SK-N-SH (cell line): ENCODE measurements at regions of chr9 and their contacts with region 1.

Region 1: GRCh38 chr9:131762356-131762932 is 22.6 kb upstream of the RAPGEF1 start:
- DNase-seq: peak; percentile 97
- H3K4me3 ChIP-seq: peak overlapping the region in 1 of 2 experiments; percentile 46; a peak in 1 of 4 replicates
- H3K27ac ChIP-seq: no peak overlapping the region
- H3K4me1 ChIP-seq: peaks cover 0 to 3% of the 10 kb centered on the region in 2 experiments; a peak in 1 of 4 replicates
- H3K27me3 ChIP-seq: peaks cover 8% of the 10 kb centered on the region
- CTCF ChIP-seq: peak; percentile 79
- EP300 ChIP-seq: no peak
- RAD21 ChIP-seq: peak; percentile 97

Region 2: DNA sequence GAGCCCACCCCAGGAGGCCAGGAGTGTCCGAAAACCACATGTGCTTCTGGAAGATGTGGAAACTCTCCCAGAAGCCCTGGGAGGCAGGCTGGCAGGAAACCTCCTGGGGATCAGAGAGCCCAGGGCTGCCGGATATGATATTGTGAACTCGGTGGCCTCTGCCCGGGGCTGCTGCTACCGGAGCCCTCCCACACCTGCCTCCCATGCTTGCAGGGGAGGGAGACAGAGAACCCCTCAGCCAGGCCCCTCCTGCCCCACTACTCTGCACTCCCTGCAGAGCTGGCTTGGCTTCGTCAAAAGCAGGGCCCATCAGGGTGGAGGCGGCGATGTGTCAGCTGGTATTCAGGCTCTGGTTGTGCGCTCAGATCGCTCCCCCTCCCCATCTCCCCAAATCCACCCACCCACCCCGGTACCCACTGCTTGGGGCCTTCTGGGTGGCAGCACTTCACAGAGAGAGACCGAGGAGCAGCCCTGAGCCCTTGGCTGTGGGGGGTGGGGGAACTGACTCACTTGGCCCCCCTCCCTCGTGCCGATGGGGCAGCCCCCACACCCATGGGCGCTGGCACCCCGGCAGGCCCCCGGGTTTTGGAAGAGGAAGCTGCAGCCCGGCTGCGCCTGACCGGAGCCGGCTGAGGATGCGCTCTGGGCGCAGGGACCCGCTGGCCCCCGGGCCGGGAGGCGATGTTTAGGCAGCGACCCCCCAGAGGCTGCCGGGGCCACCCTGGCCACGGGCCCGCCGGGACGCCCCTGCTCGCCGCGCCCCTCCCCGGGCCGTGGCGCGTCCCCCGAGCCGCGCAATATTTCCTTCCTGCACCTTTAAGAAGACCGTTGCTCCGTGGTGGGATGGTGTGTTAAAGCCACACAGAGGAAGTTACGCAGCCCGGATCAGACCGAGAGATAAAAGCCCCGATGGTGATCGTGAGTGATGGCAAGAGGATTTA is 398.6 kb after region 1 on chr9:
- CTCF ChIA-PET with region 1: interaction called, 10 read pairs
- POLR2A ChIA-PET with region 1: no interaction called
- DNase-seq: peak; percentile 84
- H3K4me3 ChIP-seq: peak overlapping the region; percentile 73 to 89
- H3K27ac ChIP-seq: peak overlapping the region in 1 of 2 experiments; percentile 16; a peak in 1 of 4 replicates
- H3K4me1 ChIP-seq: peaks cover 0 to 14% of the 10 kb centered on the region in 2 experiments; a peak in 1 of 4 replicates
- H3K27me3 ChIP-seq: no peaks in the 10 kb centered on the region
- CTCF ChIP-seq: no peak
- EP300 ChIP-seq: no peak
- RAD21 ChIP-seq: peak; percentile 19; the same call in 1 of the 2 replicates

Region 3: GRCh38 chr9:132169672-132170392 is 407.4 kb after region 1 on chr9:
- CTCF ChIA-PET with region 1: interaction called, 12 read pairs
- POLR2A ChIA-PET with region 1: no interaction called
- DNase-seq: peak; percentile 80
- H3K4me3 ChIP-seq: peak overlapping the region in 1 of 2 experiments; percentile 38; a peak in 1 of 4 replicates
- H3K27ac ChIP-seq: no peak overlapping the region
- H3K4me1 ChIP-seq: peaks cover 0 to 31% of the 10 kb centered on the region in 2 experiments; a peak in 1 of 4 replicates
- H3K27me3 ChIP-seq: no peaks in the 10 kb centered on the region
- CTCF ChIP-seq: peak; percentile 76
- EP300 ChIP-seq: no peak
- RAD21 ChIP-seq: peak; percentile 69

Region 4: DNA sequence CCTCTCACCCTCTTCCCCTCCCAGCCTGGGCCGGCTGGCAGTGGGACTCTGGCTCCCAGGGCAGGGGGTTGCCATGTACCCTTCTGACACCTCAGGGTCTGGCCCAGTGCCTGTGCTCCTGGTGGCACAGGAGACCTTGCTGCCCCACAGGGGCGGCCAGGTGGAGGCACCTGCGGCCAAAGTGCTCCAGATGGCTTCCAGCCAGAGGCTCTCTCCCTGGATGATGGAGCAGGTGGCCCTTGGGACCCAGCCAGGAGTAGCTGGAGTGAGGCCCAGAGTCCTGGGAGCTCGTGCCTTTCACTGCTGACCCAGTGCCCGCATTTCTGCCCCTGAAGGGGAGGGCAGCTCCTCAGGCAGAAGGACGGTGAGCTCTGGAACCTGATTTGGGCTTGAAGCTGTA is 486.7 kb after region 1 on chr9:
- CTCF ChIA-PET with region 1: interaction called, 22 read pairs
- POLR2A ChIA-PET with region 1: no interaction called
- DNase-seq: no peak
- H3K4me3 ChIP-seq: no peak overlapping the region
- H3K27ac ChIP-seq: no peak overlapping the region
- H3K4me1 ChIP-seq: no peaks in the 10 kb centered on the region; a peak in 1 of 4 replicates
- H3K27me3 ChIP-seq: no peaks in the 10 kb centered on the region
- CTCF ChIP-seq: no peak
- EP300 ChIP-seq: no peak
- RAD21 ChIP-seq: no peak

Region 5: GRCh38 chr9:132260846-132261245 is 498.4 kb after region 1 on chr9:
- CTCF ChIA-PET with region 1: interaction called, 71 read pairs
- POLR2A ChIA-PET with region 1: no interaction called
- DNase-seq: no peak
- H3K4me3 ChIP-seq: no peak overlapping the region
- H3K27ac ChIP-seq: no peak overlapping the region
- H3K4me1 ChIP-seq: no peaks in the 10 kb centered on the region; a peak in 1 of 4 replicates
- H3K27me3 ChIP-seq: no peaks in the 10 kb centered on the region
- CTCF ChIP-seq: no peak
- EP300 ChIP-seq: no peak
- RAD21 ChIP-seq: no peak

Region 6: GRCh38 chr9:132268725-132269352 is 506.4 kb after region 1 on chr9:
- CTCF ChIA-PET with region 1: interaction called, 71 read pairs
- POLR2A ChIA-PET with region 1: no interaction called
- DNase-seq: peak; percentile 70
- H3K4me3 ChIP-seq: no peak overlapping the region; a peak in 1 of 4 replicates
- H3K27ac ChIP-seq: peak overlapping the region; percentile 18 to 55; a peak in 2 of 4 replicates
- H3K4me1 ChIP-seq: peaks cover 0 to 3% of the 10 kb centered on the region in 2 experiments; a peak in 1 of 4 replicates
- H3K27me3 ChIP-seq: no peaks in the 10 kb centered on the region
- CTCF ChIP-seq: peak; percentile 97
- EP300 ChIP-seq: no peak
- RAD21 ChIP-seq: peak; percentile 78